ENCODE measurements at regions of chrX and their contacts with region 1.

Region 1: GRCh38 chrX:49291615-49292337 is 11.7 kb upstream of the GAGE10 start:
- DNase-seq: peak; percentile 37 to 69
- ATAC-seq: peak; percentile 58 to 79 (median 66)
- H3K4me3 ChIP-seq: no peak overlapping the region
- H3K27ac ChIP-seq: no peak overlapping the region
- H3K4me1 ChIP-seq: no peaks in the 10 kb centered on the region
- H3K27me3 ChIP-seq: peaks cover 0 to 8% (median 0%) of the 10 kb centered on the region in 3 donors
- CTCF ChIP-seq: peak; percentile 54

Region 2: DNA sequence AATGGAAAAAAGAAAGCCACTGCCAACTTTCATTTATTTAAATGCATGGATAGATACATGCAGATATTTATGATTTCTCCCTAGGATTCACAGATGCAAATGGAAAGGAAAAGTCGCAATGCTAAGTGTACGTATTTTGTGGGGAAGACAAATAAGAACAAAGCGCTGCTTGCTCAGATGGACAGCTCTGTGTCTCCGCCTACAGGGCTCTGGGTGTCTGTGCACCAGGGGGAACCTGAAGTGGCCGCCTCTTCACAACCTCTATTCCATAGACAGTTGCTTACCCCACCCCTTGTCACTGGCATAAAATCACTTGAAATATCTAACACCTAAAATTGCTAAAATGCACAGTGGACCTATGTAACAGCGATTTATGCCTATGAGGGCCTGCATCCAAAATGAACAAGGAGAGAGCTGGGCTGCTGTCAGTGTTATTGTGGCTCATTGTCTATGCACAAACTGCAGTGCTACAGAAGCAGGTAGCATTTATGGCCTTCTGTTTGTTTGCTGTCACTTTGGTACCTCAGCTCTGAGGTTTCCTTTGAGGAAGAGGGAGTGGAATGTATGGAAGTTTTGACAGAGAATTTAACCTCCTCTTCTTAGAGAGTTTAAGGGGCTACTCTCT is 462.6 kb after region 1 on chrX:
- intact Hi-C with region 1: loop called in 1 of 2 experiments (anchors 5 kb)
- DNase-seq: peak; percentile 20 to 56
- ATAC-seq: peak; percentile 64 to 85 (median 76)
- H3K4me3 ChIP-seq: no peak overlapping the region
- H3K27ac ChIP-seq: no peak overlapping the region
- H3K4me1 ChIP-seq: no peaks in the 10 kb centered on the region
- H3K27me3 ChIP-seq: peaks cover 0 to 32% (median 0%) of the 10 kb centered on the region in 3 donors
- CTCF ChIP-seq: peak; percentile 71

Region 3: DNA sequence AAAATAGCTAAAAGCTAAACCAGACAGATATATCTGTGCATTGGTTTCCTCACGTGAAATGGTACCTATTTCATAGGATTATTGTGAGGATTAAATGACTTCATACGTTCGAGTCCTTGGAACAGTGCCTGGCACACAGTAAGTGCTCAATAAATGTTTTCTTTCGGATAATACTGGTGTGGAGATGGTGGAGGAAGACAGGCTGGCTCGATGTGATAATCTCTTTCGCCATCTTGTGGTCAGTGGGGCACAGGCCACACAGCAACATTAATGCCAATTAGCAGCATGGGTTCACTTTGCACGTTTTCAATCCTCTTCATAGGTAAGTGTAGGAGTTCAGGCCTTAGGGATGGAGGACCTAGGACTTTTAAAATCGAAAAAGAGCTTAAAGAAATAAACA is 546.6 kb after region 1 on chrX:
- intact Hi-C with region 1: loop called in 1 of 2 experiments (anchors 10 kb)
- DNase-seq: no peak
- ATAC-seq: peak in 2 of 4 donors; percentile 49 to 61
- H3K4me3 ChIP-seq: no peak overlapping the region
- H3K27ac ChIP-seq: no peak overlapping the region
- H3K4me1 ChIP-seq: no peaks in the 10 kb centered on the region
- H3K27me3 ChIP-seq: peaks cover 0 to 3% (median 0%) of the 10 kb centered on the region in 3 donors
- CTCF ChIP-seq: peak; percentile 60

Measured in psoas muscle (tissue), 8 donors.